ENCODE measurements at regions of chr3 and their contacts with region 1.

Region 1: DNA sequence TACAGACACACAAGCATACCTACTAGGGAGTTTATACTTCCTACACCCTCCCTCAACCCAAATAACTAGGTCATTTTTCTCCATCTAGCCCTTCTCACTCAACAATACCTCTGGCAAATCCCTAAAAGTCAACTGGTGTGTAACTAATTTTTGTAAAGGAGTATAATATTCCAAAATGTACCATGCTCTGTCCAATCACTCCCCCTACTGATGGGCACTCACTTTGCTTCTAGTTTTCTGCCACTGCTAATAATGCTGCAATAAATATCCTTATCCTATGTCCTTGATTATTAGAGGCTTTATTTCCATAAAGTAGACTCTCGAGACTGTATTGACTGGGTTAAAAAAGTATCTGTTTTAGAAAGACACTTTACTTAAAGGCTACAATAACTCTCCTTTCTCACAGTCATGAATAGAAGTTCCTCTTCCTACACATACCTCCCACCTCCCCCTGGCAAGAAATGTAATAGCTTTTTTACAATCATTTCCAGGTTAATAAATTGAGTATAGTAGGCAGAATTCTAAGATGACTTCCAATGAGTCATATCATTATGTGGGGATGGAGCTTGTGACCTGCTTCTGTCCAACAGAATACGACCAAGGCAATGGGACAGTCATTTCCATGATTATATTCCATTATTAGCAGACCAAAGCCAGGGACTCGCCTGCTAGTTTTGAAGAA is 30.0 kb downstream of the SHQ1 start:
- H3K4me3 Mint-ChIP-seq: no peak overlapping the region
- H3K27ac Mint-ChIP-seq: no peak overlapping the region
- H3K4me1 Mint-ChIP-seq: peaks cover 13% of the 10 kb centered on the region
- H3K27me3 Mint-ChIP-seq: no peaks in the 10 kb centered on the region

Region 2: DNA sequence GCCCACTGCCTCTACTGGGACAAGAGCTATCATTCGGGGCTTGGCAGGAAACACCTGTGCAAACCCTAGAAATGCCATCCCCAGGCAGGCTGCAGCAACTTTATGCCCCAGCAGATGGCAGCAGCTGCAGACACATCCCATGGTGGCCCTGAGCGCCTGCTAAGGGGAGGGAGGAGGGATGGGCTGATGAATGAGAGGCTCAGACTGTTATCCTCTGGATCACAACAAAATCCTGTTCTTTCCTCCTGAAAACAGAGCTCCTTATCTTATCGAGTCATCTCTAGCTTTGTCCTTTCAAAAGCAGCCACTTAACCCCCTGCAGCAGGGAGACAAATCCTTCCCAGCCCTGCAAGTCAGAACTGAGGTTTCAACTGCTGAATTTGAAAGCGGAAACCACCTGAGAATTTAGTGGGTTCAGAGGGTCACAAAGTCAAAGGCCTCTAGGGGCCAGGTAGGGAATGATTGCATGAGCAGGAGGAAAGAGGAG is 942.7 kb before region 1 on chr3:
- intact Hi-C with region 1: loop called (anchors 2 kb)
- H3K4me3 Mint-ChIP-seq: no peak overlapping the region
- H3K27ac Mint-ChIP-seq: no peak overlapping the region
- H3K4me1 Mint-ChIP-seq: peaks cover 7% of the 10 kb centered on the region
- H3K27me3 Mint-ChIP-seq: peaks cover 85% of the 10 kb centered on the region

Region 3: GRCh38 chr3:72134989-72135451 is 683.2 kb before region 1 on chr3:
- intact Hi-C with region 1: loop called (anchors 10 kb)
- H3K4me3 Mint-ChIP-seq: no peak overlapping the region
- H3K27ac Mint-ChIP-seq: no peak overlapping the region
- H3K4me1 Mint-ChIP-seq: peaks cover 11% of the 10 kb centered on the region
- H3K27me3 Mint-ChIP-seq: peaks cover 46% of the 10 kb centered on the region

Region 4: DNA sequence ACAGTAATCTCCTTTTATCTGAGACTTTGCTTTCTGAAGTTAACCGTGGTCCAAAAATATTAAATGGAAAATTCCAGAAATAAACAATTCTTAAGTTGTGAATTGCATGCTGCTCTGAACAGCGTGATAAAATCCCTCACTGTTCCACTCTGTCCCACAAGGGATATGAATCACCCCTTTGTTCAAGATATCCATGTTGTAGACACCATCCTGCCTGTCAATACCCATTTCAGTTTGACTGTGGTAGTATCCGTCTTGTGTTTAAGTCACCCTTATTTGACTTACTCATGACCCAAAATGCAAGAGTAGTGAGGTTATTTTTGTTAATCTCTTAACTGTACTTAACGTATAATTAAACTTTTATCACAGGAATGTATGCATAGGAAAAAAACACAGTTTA is 405.0 kb before region 1 on chr3:
- intact Hi-C with region 1: loop called (anchors 10 kb)
- H3K4me3 Mint-ChIP-seq: no peak overlapping the region
- H3K27ac Mint-ChIP-seq: no peak overlapping the region
- H3K4me1 Mint-ChIP-seq: peaks cover 66% of the 10 kb centered on the region
- H3K27me3 Mint-ChIP-seq: no peaks in the 10 kb centered on the region